ENCODE measurements at regions of chr15 and their contacts with region 1.

Region 1: DNA sequence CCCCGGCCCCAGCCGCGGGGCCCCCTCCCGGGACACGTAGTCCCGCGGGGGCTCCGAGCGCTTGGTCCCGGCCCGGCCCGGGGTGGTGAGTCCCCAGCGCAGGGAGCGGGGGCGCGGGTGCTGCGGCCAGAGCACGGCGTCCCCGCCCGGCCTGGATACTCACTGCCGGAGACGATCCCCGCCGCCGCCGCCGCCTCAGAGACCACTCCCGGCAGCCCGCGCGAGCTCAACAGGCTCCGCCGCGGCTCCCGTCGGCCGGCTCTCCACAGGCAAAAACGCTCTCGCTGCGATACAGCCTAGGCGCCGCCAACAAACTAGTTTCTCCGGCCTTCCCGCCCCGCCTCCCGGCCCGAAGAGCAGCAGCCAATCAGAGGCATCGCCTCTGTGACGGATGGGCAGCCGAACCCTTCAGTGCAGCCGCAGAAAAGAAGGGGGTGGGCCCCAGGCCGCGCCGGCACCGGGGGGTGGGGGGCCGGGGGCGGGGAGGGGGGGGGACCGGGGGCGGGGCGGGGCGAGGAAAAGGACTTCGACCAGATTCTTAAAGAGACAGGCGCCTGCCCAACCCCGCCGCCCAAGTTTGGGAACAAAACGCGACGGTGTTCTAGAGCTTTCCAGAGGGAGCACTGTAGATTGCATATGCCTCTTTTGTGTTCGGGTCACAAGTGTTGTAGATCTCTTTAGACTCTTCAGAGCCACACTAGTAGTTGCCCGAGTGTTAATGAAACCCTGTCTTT is at the start of gene KLHL25:
- DNase-seq: peak; percentile 95
- ATAC-seq: peak; percentile 94
- H3K4me3 Mint-ChIP-seq: peak within 1 kb of the TSS; percentile 83
- H3K27ac Mint-ChIP-seq: peak within 1 kb of the TSS; percentile 76
- H3K4me1 Mint-ChIP-seq: peaks cover 37% of the 10 kb centered on the region
- H3K27me3 Mint-ChIP-seq: no peaks in the 10 kb centered on the region
- total RNA-seq, gene KLHL25: 4.9 to 5.2 TPM

Region 2: DNA sequence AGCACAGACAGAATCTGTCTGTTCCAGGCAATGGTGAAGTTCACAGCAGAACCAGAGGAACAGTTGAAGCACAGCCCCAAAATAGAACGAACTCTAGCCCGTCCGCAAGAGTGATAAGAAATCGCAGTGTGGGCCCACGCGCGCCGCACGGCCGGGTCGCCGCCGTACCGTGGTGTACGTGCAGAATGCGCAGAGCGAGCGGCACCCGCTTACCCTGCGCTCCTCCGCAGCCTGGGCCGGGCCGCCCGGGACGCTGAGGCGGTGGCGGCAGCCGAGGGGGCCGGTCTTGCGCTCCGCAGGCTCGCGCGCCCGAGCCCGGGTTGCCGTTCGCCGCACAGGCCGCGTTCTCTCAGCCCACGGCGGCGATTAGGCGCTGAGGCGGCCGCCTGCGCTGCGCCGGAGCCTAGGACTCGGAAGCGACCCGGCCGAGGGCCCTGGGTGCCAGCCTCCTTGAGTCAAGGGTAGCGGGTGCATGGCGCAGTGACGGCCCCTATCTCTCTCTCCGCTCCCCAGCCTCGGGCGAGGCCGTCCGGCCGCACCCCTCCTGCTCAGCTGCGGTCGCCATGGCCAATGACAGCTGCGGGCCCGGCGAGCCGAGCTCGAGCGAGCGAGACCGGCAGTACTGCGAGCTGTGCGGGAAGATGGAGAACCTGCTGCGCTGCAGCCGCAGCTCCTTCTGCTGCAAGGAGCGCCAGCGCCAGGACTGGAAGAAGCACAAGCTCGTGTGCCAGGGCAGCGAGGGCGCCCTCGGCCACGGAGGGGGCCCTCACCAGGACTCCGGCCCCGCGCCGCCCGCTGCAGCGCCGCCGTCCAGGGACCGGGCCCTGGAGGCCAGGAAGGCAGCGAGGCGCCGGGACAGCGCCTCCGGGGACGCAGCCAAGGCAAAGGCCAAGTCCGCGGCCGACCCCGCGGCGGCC is 1161.2 kb before region 1 on chr15:
- CTCF ChIA-PET with region 1: no interaction called
- POLR2A ChIA-PET with region 1: no interaction called
- intact Hi-C with region 1: loop called (anchors 5 to 10 kb)
- DNase-seq: peak; percentile 87
- ATAC-seq: peak; percentile 57
- H3K4me3 Mint-ChIP-seq: peak overlapping the region; percentile 93
- H3K27ac Mint-ChIP-seq: peak overlapping the region; percentile 99
- H3K4me1 Mint-ChIP-seq: peaks cover 45% of the 10 kb centered on the region
- H3K27me3 Mint-ChIP-seq: no peaks in the 10 kb centered on the region

Region 3: GRCh38 chr15:85380217-85380811 is 414.5 kb before region 1 on chr15 and contains the start of gene AKAP13:
- CTCF ChIA-PET with region 1: interaction called, 3 read pairs
- POLR2A ChIA-PET with region 1: no interaction called
- intact Hi-C with region 1: loop called in 1 of 2 experiments (anchors 10 kb)
- DNase-seq: peak; percentile 97
- ATAC-seq: peak; percentile 90
- H3K4me3 Mint-ChIP-seq: peak within 1 kb of the TSS; percentile 72
- H3K27ac Mint-ChIP-seq: peak within 1 kb of the TSS; percentile 92
- H3K4me1 Mint-ChIP-seq: peaks cover 50% of the 10 kb centered on the region
- H3K27me3 Mint-ChIP-seq: no peaks in the 10 kb centered on the region
- total RNA-seq, gene AKAP13: 85.1 to 104 TPM

Region 4: DNA sequence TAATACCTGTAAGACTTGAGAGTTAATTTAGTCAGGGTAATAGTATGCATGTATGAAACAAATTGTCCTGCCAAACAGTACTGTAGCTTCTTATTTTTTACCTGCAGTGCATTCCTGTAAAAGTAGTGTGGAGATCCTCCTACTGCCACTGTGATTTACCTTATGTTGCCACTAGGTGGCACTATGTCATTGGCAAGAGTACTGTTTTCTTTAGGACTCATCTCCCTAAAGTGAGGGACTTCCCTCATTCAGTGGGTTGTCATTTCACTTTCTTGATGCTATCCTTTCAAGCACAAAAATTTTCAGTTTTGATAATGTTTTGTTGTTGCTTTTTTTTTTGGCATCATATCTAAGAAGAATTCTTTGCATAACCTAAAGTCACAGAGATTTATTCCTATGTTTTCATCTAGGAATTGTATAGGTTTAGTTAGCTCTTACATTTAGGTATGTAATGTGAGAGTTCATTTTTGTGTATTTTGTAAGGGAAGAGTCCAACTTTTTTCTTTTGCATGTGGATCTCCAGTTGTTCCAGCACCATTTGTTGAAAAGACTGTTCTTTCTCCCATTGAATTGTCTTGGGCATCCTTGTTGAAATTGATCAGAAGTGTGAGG is 308.7 kb before region 1 on chr15:
- CTCF ChIA-PET with region 1: interaction called, 4 read pairs
- POLR2A ChIA-PET with region 1: no interaction called
- intact Hi-C with region 1: loop called in 1 of 2 experiments (anchors 5 kb)
- DNase-seq: peak; percentile 74
- ATAC-seq: peak; percentile 92
- H3K4me3 Mint-ChIP-seq: no peak overlapping the region
- H3K27ac Mint-ChIP-seq: peak overlapping the region; percentile 23
- H3K4me1 Mint-ChIP-seq: peaks cover 73% of the 10 kb centered on the region
- H3K27me3 Mint-ChIP-seq: no peaks in the 10 kb centered on the region

Region 5: GRCh38 chr15:85543741-85544155 is 251.0 kb before region 1 on chr15:
- CTCF ChIA-PET with region 1: no interaction called
- POLR2A ChIA-PET with region 1: no interaction called
- intact Hi-C with region 1: loop called in 1 of 2 experiments (anchors 2 kb)
- DNase-seq: peak; percentile 60
- ATAC-seq: peak; percentile 10
- H3K4me3 Mint-ChIP-seq: peak overlapping the region; percentile 58
- H3K27ac Mint-ChIP-seq: peak overlapping the region; percentile 64
- H3K4me1 Mint-ChIP-seq: peaks cover 83% of the 10 kb centered on the region
- H3K27me3 Mint-ChIP-seq: no peaks in the 10 kb centered on the region

Region 6: GRCh38 chr15:85667491-85668424 is 127.0 kb before region 1 on chr15:
- CTCF ChIA-PET with region 1: no interaction called
- POLR2A ChIA-PET with region 1: no interaction called
- intact Hi-C with region 1: loop called in 1 of 2 experiments (anchors 1 kb)
- DNase-seq: peak; percentile 73
- ATAC-seq: peak; percentile 94
- H3K4me3 Mint-ChIP-seq: peak overlapping the region; percentile 47
- H3K27ac Mint-ChIP-seq: peak overlapping the region; percentile 94
- H3K4me1 Mint-ChIP-seq: peaks cover 35% of the 10 kb centered on the region
- H3K27me3 Mint-ChIP-seq: no peaks in the 10 kb centered on the region

Region 7: DNA sequence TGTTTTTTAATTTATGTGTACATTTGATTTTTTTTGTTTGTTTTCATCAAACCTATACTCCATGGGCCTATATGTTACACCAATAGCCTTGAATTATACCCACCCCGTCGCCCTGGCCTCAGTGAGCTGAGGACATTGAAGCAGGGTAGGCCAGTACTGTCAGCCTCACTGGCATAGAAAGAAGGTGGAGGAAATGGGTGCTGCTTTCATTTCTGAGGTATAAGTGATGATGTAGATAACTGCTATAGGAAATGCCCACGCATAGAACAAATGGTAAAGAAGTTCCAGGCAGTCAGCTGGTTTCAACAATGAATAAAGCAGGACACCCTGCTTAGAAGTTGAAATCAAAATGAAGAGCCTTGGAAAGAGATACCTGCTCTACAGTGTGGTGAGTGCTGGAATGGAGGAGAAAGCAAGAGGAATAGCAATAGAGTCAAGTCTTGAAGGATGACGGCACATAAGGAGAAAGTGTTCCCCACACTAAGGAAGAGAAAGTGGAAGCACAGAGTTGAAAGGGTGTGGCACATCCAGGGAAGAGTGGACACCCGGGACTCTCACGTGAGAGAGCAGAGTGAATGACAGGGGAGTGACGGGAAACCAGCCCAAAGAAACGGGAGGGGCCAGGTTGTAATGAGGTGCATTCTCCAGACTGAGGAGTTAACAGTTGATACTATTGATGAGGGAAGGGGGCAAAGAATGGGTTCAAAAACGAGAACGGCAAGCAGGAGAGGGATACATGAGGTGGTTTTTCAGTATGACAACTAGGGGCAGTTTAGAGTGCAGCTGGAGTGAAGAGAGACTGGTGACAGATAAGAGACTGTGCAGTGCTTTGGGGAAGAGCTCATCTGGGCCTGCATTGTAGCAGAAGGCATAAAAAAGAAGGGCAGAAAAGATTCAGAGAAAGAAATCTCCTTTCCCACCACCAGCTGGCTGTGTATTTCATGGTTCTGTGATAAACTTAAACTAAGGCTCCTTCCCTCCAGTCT is 70.5 kb before region 1 on chr15:
- CTCF ChIA-PET with region 1: interaction called, 4 read pairs
- POLR2A ChIA-PET with region 1: interaction called, 4 read pairs
- intact Hi-C with region 1: loop called in 1 of 2 experiments (anchors 5 kb)
- DNase-seq: peak; percentile 45
- ATAC-seq: peak; percentile 82
- H3K4me3 Mint-ChIP-seq: peak overlapping the region; percentile 50
- H3K27ac Mint-ChIP-seq: peak overlapping the region; percentile 98
- H3K4me1 Mint-ChIP-seq: peaks cover 68% of the 10 kb centered on the region
- H3K27me3 Mint-ChIP-seq: no peaks in the 10 kb centered on the region

Measured in activated CD4-positive, alpha-beta T cell treated with anti-CD3 and anti-CD28 coated beads for 36 hours (primary cell).